ENCODE measurements at regions of chr9 and their contacts with region 1.

Region 1: DNA sequence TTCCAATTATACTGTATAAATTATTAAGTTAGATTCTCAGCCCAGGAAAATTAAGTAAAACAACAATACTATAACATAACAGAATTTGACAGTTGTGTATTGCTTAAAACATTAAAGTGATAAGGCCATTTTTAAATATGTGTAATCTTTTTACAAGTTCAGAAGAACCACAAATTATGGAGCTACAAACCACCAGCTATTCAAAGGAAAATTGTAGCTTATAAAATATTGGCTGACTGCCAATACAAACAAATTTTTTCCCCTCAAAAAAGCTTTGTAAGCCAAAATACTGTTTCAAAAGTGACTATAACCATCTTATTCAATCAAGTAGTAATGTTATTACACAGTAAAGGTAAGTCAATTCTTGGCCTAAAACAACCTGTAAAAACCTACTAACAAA is 21.9 kb downstream of the STRBP start:
- DNase-seq: no peak
- ATAC-seq: no peak
- H3K4me3 ChIP-seq: no peak overlapping the region
- H3K27ac ChIP-seq: no peak overlapping the region
- H3K4me1 ChIP-seq: no peaks in the 10 kb centered on the region
- H3K27me3 ChIP-seq: no peaks in the 10 kb centered on the region
- CTCF ChIP-seq: no peak

Region 2: GRCh38 chr9:123049589-123050222 is 196.8 kb before region 1 on chr9:
- intact Hi-C with region 1: no loop called
- DNase-seq: no peak
- ATAC-seq: peak in 3 of 4 donors; percentile 65 to 87 (median 82)
- H3K4me3 ChIP-seq: no peak overlapping the region
- H3K27ac ChIP-seq: peak overlapping the region; percentile 3
- H3K4me1 ChIP-seq: peaks cover 27% of the 10 kb centered on the region
- H3K27me3 ChIP-seq: no peaks in the 10 kb centered on the region
- CTCF ChIP-seq: no peak

Region 3: GRCh38 chr9:123191260-123192079 is 55.1 kb before region 1 on chr9:
- intact Hi-C with region 1: loop called in 1 of 2 experiments (anchors 10 kb)
- DNase-seq: no peak
- ATAC-seq: no peak
- H3K4me3 ChIP-seq: no peak overlapping the region
- H3K27ac ChIP-seq: no peak overlapping the region
- H3K4me1 ChIP-seq: no peaks in the 10 kb centered on the region
- H3K27me3 ChIP-seq: no peaks in the 10 kb centered on the region
- CTCF ChIP-seq: no peak